ENCODE measurements at regions of chr4 and their contacts with region 1.

Region 1: DNA sequence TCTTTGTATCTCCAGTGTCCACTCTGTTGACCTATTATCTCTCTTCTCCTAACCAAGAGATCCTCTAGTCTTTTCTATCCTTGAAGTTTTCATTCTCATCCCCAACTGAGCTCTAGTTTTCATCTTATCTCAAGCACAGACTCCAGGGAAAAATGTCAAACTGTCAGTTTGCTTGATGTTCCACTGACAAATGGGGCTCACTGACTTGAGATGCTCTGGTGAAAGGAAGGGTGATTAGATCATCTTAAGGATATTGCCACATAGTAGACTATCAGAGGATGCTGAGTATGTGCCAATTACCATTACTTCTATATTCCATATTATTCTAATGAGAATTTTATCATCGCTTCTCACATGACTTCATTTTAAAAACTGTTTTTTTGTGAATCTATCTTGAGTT is 2008.2 kb downstream of the ARAP2 start:
- H3K4me3 Mint-ChIP-seq: no peak overlapping the region
- H3K27ac Mint-ChIP-seq: no peak overlapping the region
- H3K4me1 Mint-ChIP-seq: no peaks in the 10 kb centered on the region
- H3K27me3 Mint-ChIP-seq: no peaks in the 10 kb centered on the region

Region 2: DNA sequence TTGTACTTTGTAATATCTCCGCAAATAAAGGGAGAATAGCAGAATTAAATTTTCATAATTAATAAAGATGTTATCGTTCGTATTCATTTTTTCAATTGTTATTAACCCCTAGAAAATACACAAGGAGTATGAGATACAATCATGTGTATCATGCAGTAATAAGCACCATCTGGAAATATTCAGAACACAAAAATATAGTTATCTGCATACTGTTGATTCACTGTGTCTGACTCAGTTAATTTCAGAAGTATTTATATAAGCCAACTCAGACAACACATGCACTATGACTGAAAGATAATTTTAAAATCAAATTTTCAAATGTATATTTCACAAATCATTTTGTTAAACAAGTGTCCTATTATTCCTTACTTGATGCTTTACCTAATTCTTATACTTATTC is 53.4 kb after region 1 on chr4:
- intact Hi-C with region 1: loop called (anchors 5 kb)
- H3K4me3 Mint-ChIP-seq: no peak overlapping the region
- H3K27ac Mint-ChIP-seq: no peak overlapping the region
- H3K4me1 Mint-ChIP-seq: no peaks in the 10 kb centered on the region
- H3K27me3 Mint-ChIP-seq: no peaks in the 10 kb centered on the region